ENCODE measurements at regions of chr1 and their contacts with region 1.

Region 1: GRCh38 chr1:7752512-7753417 is 18.3 kb upstream of the VAMP3 start:
- DNase-seq: peak in 1 of 3 donors; percentile 87
- ATAC-seq: peak; percentile 66
- H3K4me3 ChIP-seq: no peak overlapping the region
- H3K4me1 ChIP-seq: no peaks in the 10 kb centered on the region
- CTCF ChIP-seq: peak; percentile 45

Region 2: GRCh38 chr1:7621334-7622219 is 131.2 kb before region 1 on chr1:
- intact Hi-C with region 1: no loop called
- DNase-seq: no peak
- ATAC-seq: no peak
- H3K4me3 ChIP-seq: no peak overlapping the region
- H3K4me1 ChIP-seq: no peaks in the 10 kb centered on the region
- CTCF ChIP-seq: no peak

Region 3: DNA sequence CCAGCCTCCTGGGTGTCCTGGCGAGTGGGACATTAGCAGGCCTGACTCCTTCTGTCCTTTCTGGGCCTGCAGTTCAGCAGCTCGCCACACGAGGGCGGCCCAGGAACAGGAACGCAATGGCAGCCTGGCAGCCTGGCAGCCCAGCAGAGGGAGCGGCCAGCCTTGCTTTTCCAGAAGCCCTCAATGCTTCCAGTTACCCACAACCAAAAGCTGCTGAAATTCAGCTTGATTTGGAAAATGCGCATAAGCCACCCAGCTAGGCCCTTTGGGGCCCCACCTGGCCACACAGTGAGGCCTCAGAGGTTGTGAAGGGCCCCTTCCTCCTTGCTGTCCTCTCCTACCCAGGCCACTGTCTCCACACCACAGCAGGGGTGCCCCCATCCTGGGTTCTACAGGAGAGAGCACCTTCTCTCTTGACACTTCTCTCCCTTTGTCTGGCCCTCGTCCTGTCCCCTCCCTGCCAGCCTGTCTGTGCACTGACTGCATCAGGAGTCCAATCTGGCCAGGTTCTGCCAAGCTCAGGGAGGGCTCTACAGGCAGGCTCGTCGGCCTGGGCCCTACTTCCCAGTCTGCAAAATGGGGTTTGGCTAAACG is 85.0 kb before region 1 on chr1:
- intact Hi-C with region 1: loop called (anchors 2 kb)
- DNase-seq: peak; percentile 84 to 96 (median 93)
- ATAC-seq: peak; percentile 92
- H3K4me3 ChIP-seq: no peak overlapping the region
- H3K4me1 ChIP-seq: no peaks in the 10 kb centered on the region
- CTCF ChIP-seq: peak; percentile 100

Region 4: DNA sequence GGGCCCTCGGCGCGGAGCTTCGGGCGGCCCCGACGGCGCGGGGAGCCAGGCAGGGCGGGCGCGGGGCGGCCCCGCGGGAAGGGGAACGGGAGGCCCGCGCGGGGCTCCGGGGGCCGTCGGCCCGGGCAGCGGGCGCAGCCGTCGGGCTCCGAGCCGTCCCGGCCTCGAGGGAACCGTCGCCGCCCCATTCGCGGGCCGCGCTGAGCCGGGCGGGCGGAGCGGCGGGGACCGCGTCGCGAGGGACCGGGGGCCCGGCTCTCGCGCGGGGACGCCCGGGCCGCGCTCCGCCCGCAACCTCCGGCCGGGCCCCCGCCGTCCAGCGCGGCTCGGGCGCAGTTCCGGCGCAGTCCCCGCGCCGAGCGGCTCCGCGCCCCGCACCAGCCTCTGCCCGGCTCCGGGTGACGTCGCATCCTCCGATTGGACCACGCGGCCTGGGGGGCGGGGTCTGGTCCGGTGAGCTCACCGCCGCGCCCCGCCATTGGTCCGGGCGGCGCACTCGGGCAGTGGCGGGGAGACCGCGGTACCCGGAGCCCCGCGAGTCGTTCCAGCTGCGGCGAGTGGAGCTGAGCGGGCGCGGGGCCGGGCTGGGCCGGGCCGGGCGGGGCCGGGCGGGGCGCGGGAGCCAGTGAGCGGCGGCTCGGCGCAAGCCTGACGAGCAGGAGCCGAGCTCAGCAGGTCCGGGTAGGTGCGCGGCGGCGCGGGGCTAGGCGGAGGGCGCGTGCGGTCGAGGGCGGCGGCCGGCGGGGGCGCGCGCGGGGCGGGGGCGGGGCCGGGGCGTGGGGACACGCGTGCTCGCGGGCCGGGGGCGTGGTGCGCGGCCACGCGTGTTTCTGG is 48.3 kb before region 1 on chr1:
- intact Hi-C with region 1: loop called in 1 of 2 experiments (anchors 10 kb)
- DNase-seq: peak; percentile 92 to 96 (median 96)
- ATAC-seq: peak; percentile 99
- H3K4me3 ChIP-seq: no peak overlapping the region
- H3K4me1 ChIP-seq: no peaks in the 10 kb centered on the region
- CTCF ChIP-seq: no peak

Region 5: GRCh38 chr1:7795406-7795805 is 42.6 kb after region 1 on chr1:
- intact Hi-C with region 1: no loop called
- DNase-seq: no peak
- ATAC-seq: no peak
- H3K4me3 ChIP-seq: no peak overlapping the region
- H3K4me1 ChIP-seq: no peaks in the 10 kb centered on the region
- CTCF ChIP-seq: no peak